ENCODE measurements at regions of chr3 and their contacts with region 1.

Region 1: GRCh38 chr3:47791193-47791855 is 9.6 kb upstream of the SMARCC1 start:
- DNase-seq: no peak
- ATAC-seq: no peak
- H3K4me3 ChIP-seq: no peak overlapping the region
- H3K27ac ChIP-seq: no peak overlapping the region
- H3K4me1 ChIP-seq: no peaks in the 10 kb centered on the region
- H3K27me3 ChIP-seq: no peaks in the 10 kb centered on the region
- CTCF ChIP-seq: no peak

Region 2: DNA sequence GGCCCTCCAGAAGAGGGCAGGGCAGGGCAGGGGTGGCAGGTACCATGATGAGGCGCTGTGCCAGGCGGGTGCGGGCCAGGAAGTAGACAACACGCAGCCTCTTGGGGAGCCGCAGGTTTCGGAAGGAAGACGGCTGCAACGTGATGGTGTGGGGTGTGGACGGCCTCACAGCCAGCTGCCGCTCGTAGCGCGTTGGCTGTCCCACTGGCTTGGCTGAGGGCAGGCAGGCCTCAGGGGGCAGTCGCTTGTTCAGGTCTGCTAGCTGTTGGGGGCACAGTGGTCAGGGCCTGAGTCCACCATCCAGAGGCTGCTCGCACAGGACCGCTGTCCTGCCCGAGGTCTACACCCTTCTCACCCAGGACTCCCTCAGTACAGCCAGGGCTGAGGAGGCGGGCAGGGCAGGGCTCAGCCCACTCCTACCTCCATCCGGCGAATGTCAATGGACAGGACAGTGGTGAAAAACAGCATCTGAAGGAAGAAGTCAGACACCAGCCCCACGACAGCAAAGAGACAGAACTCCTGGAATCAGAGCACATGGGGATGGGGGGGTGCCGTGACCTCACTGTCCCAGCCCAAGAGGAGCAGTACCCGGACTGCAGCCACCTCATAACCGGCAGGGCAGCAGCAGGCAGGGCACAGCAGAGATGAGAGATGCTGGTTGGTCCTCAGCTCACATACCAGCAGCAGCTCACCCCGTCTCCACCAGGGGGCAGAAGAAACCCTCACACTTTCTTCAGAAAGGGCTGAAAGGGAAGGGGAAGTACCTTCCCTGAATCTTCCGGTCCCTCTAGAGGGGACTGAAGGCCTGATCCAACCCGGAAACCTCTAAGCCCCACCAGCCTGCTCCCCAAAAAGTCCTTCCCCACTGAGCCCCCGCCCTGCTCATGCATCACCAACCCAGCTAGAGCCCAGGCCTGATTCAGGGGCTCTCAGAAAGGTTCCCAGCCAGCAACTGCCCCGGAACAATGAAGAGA is 370.5 kb before region 1 on chr3:
- CTCF ChIA-PET with region 1: interaction called, 12 read pairs
- POLR2A ChIA-PET with region 1: no interaction called
- in situ Hi-C with region 1: no loop called
- intact Hi-C with region 1: no loop called
- DNase-seq: peak; percentile 77
- ATAC-seq: peak; percentile 79
- H3K4me3 ChIP-seq: no peak overlapping the region
- H3K27ac ChIP-seq: peak overlapping the region; percentile 54; the same call in 1 of the 2 replicates
- H3K4me1 ChIP-seq: no peaks in the 10 kb centered on the region
- H3K27me3 ChIP-seq: no peaks in the 10 kb centered on the region
- CTCF ChIP-seq: peak; percentile 88

Region 3: DNA sequence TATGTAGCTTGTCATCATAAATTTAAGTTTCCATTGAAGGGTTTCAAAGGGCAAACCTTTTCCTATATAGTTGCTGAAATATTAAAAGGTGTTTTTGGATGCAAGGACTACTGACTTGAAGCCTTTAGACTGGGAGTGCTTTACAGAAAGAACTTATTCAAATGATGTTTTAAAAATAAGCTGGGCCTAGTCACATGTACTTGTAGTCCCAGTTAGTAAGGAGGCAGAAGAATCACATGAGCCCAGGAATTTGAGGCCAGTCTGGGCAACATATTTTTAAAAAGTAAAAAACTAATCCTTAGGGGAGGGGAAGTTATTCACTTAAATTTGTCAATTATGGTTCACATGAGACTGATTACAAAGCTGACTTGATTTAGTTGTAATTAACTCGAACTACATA is 74.7 kb before region 1 on chr3:
- CTCF ChIA-PET with region 1: no interaction called
- POLR2A ChIA-PET with region 1: no interaction called
- in situ Hi-C with region 1: no loop called
- intact Hi-C with region 1: no loop called
- DNase-seq: no peak
- ATAC-seq: no peak
- H3K4me3 ChIP-seq: no peak overlapping the region
- H3K27ac ChIP-seq: no peak overlapping the region
- H3K4me1 ChIP-seq: no peaks in the 10 kb centered on the region
- H3K27me3 ChIP-seq: no peaks in the 10 kb centered on the region
- CTCF ChIP-seq: no peak

Region 4: GRCh38 chr3:47731061-47731460 is 60.3 kb before region 1 on chr3:
- CTCF ChIA-PET with region 1: no interaction called
- POLR2A ChIA-PET with region 1: no interaction called
- in situ Hi-C with region 1: no loop called
- intact Hi-C with region 1: no loop called
- DNase-seq: no peak
- ATAC-seq: no peak
- H3K4me3 ChIP-seq: no peak overlapping the region
- H3K27ac ChIP-seq: no peak overlapping the region
- H3K4me1 ChIP-seq: no peaks in the 10 kb centered on the region; the same call in 1 of the 2 replicates
- H3K27me3 ChIP-seq: no peaks in the 10 kb centered on the region
- CTCF ChIP-seq: no peak

Measured in Panc1 (cell line).